Adrenal gland (tissue), 19 donors: ENCODE measurements at regions of chr5 and their contacts with region 1.

Region 1: GRCh38 chr5:77645158-77645994 is 6.9 kb upstream of the OTP start:
- DNase-seq: peak in 4 of 7 donors; percentile 38 to 61 (median 46)
- H3K4me3 ChIP-seq: peak overlapping the region in 1 of 4 donors; percentile 67
- H3K27ac ChIP-seq: no peak overlapping the region
- H3K4me1 ChIP-seq: peaks cover 4% of the 10 kb centered on the region in 2 donors
- H3K27me3 ChIP-seq: peaks cover 55% of the 10 kb centered on the region
- CTCF ChIP-seq: peak in 3 of 6 experiments; percentile 53 to 79 (median 56)
- POLR2A ChIP-seq: no peak

Region 2: DNA sequence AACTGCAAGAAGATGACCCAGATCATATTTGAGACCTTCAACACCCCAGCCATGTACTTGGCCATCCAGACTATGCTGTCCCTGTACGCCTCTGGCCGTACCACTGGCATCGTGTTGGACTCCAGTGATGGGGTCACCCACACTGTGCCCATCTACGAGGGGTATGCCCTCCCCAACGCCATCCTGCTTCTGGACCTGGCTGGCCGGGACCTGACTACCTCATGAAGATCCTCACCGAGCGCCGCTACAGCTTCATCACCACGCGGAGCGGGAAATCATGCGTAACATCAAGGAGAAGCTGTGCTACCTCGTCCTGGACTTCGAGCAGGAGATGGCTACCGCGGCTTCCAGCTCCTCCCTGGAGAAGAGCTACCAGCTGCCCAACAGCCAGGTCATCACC is 139.9 kb after region 1 on chr5:
- intact Hi-C with region 1: loop called (anchors 10 kb)
- DNase-seq: no peak
- H3K4me3 ChIP-seq: no peak overlapping the region
- H3K27ac ChIP-seq: no peak overlapping the region
- H3K4me1 ChIP-seq: no peaks in the 10 kb centered on the region
- H3K27me3 ChIP-seq: no peaks in the 10 kb centered on the region
- CTCF ChIP-seq: no peak
- POLR2A ChIP-seq: no peak

Region 3: DNA sequence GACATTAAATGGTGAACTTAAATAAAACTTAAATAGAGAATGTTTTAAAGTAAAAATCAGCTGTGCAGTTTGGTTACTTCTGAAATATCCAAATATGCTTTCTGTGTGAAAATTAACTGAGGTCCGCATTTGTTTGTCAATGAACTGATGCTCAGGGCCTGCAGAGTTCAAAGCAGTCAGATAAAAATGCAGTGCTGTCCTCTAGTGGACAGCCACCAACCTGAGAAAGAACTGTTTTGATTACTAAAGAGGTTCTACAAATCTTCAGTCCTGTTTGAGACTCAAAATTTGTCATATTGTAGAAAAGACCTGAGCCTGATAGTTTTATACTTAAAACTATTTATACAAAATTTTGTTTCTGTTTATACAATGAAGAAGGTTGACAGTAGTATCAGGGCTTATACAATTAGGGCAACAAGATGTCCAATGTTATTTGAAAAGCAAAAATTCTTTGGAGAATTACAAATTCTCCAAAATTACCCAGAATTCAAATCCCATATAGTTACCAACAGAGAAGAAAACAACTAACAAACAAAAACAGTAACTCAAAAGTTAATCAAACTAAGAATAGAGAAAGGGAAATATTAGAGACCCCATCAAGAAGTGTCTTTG is 363.1 kb after region 1 on chr5:
- intact Hi-C with region 1: loop called in 1 of 2 experiments (anchors 10 kb)
- DNase-seq: peak in 6 of 7 donors; percentile 26 to 64 (median 38)
- H3K4me3 ChIP-seq: no peak overlapping the region
- H3K27ac ChIP-seq: no peak overlapping the region
- H3K4me1 ChIP-seq: no peaks in the 10 kb centered on the region
- H3K27me3 ChIP-seq: no peaks in the 10 kb centered on the region
- CTCF ChIP-seq: peak; percentile 61 to 82 (median 75)
- POLR2A ChIP-seq: no peak